B cell (primary cell): ENCODE measurements at regions of chr9 and their contacts with region 1.

Region 1: DNA sequence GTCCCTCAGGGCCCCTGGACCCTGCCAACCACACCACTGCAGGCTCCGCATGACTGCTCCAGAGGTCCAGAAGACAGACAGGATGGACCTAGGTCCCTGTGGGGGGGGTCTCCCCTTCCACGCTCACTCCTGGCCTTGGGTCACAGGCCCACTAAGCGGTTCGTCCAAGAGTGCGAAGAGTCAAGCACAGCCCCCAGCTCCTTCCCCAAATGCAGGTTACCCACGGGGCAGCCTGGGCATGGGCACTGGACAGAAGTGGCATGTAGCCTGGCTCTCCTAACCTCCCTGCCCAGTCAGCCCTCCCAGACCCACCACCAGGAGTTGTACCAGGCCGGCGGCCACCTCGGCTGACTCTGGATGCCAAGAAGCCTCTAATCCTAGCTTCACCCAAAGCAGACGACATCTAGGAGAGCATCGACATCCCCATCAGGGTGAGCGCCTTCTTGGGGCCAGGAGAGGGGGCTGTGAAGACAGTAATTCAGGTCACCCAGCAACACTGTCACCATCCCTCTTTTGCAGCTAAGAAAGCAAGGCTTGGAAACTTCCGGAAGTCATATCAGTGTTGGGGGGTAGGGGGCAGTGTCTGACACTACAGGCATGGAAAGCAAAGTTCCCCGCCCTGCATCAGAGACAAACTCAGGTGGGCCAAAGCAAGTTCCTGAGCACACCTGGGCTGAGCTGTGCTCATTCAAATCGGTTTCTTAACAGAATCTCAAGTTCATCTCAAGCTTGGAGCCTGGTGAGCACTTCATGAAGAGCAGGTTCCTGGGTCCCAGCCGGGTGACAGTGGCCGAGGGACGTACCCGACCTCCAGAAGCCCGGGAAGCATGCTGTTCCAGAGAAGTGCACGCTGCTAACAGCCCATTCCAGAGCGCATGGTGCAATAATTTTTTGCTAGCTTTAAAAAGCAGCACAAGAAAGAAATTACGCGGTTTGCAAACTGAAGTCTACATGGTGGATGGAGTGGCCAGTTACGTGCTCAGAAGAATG is 68.7 kb downstream of the SEMA4D start:
- DNase-seq: peak; percentile 70
- ATAC-seq: peak; percentile 29
- H3K4me3 ChIP-seq: no peak overlapping the region
- H3K4me3 Mint-ChIP-seq: no peak overlapping the region
- H3K27ac ChIP-seq: no peak overlapping the region
- H3K27ac Mint-ChIP-seq: peak overlapping the region; percentile 59
- H3K4me1 ChIP-seq: peaks cover 78 to 98% of the 10 kb centered on the region in 2 donors
- H3K4me1 Mint-ChIP-seq: peaks cover 86% of the 10 kb centered on the region
- H3K27me3 ChIP-seq: no peaks in the 10 kb centered on the region
- H3K27me3 Mint-ChIP-seq: no peaks in the 10 kb centered on the region
- CTCF ChIP-seq: peak; percentile 68

Region 2: GRCh38 chr9:89284076-89284475 is 145.1 kb before region 1 on chr9:
- CTCF ChIA-PET with region 1: no interaction called
- POLR2A ChIA-PET with region 1: no interaction called
- intact Hi-C with region 1: no loop called
- DNase-seq: no peak
- ATAC-seq: no peak
- H3K4me3 ChIP-seq: no peak overlapping the region
- H3K4me3 Mint-ChIP-seq: no peak overlapping the region
- H3K27ac ChIP-seq: no peak overlapping the region
- H3K27ac Mint-ChIP-seq: no peak overlapping the region
- H3K4me1 ChIP-seq: no peaks in the 10 kb centered on the region
- H3K4me1 Mint-ChIP-seq: no peaks in the 10 kb centered on the region
- H3K27me3 ChIP-seq: no peaks in the 10 kb centered on the region
- H3K27me3 Mint-ChIP-seq: no peaks in the 10 kb centered on the region
- CTCF ChIP-seq: no peak

Region 3: GRCh38 chr9:89391585-89391984 is 37.6 kb before region 1 on chr9:
- CTCF ChIA-PET with region 1: no interaction called
- POLR2A ChIA-PET with region 1: no interaction called
- intact Hi-C with region 1: no loop called
- DNase-seq: no peak
- ATAC-seq: no peak
- H3K4me3 ChIP-seq: no peak overlapping the region
- H3K4me3 Mint-ChIP-seq: no peak overlapping the region
- H3K27ac ChIP-seq: no peak overlapping the region
- H3K27ac Mint-ChIP-seq: no peak overlapping the region
- H3K4me1 ChIP-seq: peaks cover 0 to 10% of the 10 kb centered on the region in 2 donors
- H3K4me1 Mint-ChIP-seq: peaks cover 9% of the 10 kb centered on the region
- H3K27me3 ChIP-seq: no peaks in the 10 kb centered on the region
- H3K27me3 Mint-ChIP-seq: no peaks in the 10 kb centered on the region
- CTCF ChIP-seq: no peak

Region 4: GRCh38 chr9:89405826-89406225 is 23.4 kb before region 1 on chr9:
- CTCF ChIA-PET with region 1: interaction called, 43 read pairs
- POLR2A ChIA-PET with region 1: interaction called, 6 read pairs
- intact Hi-C with region 1: loop called (anchors 2 kb)
- DNase-seq: peak; percentile 63
- ATAC-seq: peak; percentile 35
- H3K4me3 ChIP-seq: peak overlapping the region; percentile 3 to 47 (median 29)
- H3K4me3 Mint-ChIP-seq: peak overlapping the region; percentile 84
- H3K27ac ChIP-seq: peak overlapping the region; percentile 62 to 79
- H3K27ac Mint-ChIP-seq: peak overlapping the region; percentile 95
- H3K4me1 ChIP-seq: peaks cover 77 to 86% of the 10 kb centered on the region in 2 donors
- H3K4me1 Mint-ChIP-seq: peaks cover 89% of the 10 kb centered on the region
- H3K27me3 ChIP-seq: no peaks in the 10 kb centered on the region
- H3K27me3 Mint-ChIP-seq: no peaks in the 10 kb centered on the region
- CTCF ChIP-seq: no peak

Region 5: DNA sequence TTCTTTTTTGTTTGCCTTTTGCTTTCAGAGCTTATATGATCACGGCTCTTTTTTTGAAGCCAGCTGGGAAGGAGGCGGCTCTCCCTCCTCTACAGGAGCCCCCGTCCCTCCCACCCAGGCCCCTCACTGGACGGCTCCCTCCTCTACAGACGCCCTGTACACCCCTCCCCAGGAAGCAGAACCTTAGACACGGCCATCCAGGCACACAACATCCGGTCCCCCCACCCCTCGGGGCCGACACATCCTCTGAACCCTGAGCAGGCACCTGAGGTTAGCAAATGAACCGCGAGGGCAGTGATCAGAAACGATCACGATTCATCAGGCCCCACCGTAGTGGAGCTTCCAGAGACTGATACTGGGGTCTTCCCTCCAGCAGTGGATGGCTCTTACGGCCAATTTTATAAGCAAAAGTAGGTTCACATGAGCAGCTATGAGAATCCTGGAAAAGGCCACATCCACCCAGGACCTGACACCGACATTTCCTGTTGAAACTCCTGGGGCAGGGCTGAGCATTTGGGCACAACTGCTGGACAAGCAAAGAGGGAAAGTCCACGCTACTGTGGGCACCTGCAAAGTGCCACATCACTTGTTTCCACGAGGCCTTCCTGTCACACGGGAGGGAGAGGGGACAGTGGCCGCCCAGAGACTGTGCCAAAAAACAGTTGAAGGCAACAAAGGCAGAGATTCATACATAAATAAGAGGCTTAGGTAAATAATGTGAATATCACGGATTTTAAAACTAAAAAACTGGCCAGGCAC is 10.1 kb before region 1 on chr9:
- CTCF ChIA-PET with region 1: interaction called, 10 read pairs
- POLR2A ChIA-PET with region 1: interaction called, 5 read pairs
- intact Hi-C with region 1: loop called (anchors 1 kb)
- DNase-seq: peak; percentile 70
- ATAC-seq: peak; percentile 86
- H3K4me3 ChIP-seq: peak overlapping the region in 4 of 5 experiments; percentile 1 to 42 (median 8)
- H3K4me3 Mint-ChIP-seq: peak overlapping the region; percentile 85
- H3K27ac ChIP-seq: peak overlapping the region; percentile 64 to 65
- H3K27ac Mint-ChIP-seq: peak overlapping the region; percentile 92
- H3K4me1 ChIP-seq: peaks cover 44 to 56% of the 10 kb centered on the region in 2 donors
- H3K4me1 Mint-ChIP-seq: peaks cover 68% of the 10 kb centered on the region
- H3K27me3 ChIP-seq: no peaks in the 10 kb centered on the region
- H3K27me3 Mint-ChIP-seq: no peaks in the 10 kb centered on the region
- CTCF ChIP-seq: no peak

Region 6: GRCh38 chr9:89542401-89543021 is 113.3 kb after region 1 on chr9:
- CTCF ChIA-PET with region 1: interaction called, 155 read pairs
- POLR2A ChIA-PET with region 1: interaction called, 3 read pairs
- intact Hi-C with region 1: no loop called
- DNase-seq: peak; percentile 35
- ATAC-seq: peak; percentile 66
- H3K4me3 ChIP-seq: no peak overlapping the region
- H3K4me3 Mint-ChIP-seq: peak overlapping the region; percentile 48
- H3K27ac ChIP-seq: no peak overlapping the region
- H3K27ac Mint-ChIP-seq: peak overlapping the region; percentile 87
- H3K4me1 ChIP-seq: peaks cover 25 to 29% of the 10 kb centered on the region in 2 donors
- H3K4me1 Mint-ChIP-seq: peaks cover 32% of the 10 kb centered on the region
- H3K27me3 ChIP-seq: no peaks in the 10 kb centered on the region
- H3K27me3 Mint-ChIP-seq: no peaks in the 10 kb centered on the region
- CTCF ChIP-seq: no peak